T-cell (primary cell): ENCODE measurements at regions of chr1 and their contacts with region 1.

Region 1: DNA sequence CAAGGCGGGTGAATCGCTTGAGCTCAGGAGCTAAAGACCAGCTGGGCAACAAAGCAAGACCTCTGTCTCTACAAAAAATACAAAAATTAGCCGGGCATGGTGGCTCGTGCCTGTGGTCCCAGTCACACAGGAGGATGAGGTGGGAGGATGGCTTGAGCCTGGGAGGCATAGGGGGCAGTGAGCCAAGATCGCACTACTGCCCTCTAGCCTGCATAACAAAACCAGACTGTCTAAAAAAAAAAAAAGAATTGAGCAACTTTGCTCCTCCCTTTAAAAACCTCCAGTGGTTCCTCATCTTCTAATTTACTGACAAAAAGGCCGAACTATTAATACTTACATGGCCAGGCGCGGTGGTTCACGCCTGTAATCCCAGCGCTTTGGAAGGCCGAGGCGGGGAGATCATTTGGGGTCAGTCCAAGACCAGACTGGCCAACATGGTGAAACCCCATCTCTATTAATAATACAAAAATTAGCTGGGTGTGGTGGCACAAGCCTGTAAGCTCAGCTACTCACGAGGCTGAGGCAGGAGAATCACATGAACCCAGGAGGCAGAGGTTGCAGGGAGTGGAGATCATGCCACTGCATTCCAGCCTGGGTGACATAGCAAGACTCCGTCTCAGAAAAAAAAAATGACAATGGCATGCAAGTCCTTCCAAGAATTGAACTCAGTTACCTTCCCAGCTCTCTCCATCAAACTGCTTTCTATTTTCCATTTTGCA is 4.4 kb downstream of the ACBD3 start:
- DNase-seq: peak in 1 of 35 experiments; percentile 8
- ATAC-seq: no peak
- H3K4me3 ChIP-seq: no peak overlapping the region
- H3K4me3 Mint-ChIP-seq: peak overlapping the region in 1 of 3 donors; percentile 30
- H3K27ac ChIP-seq: no peak overlapping the region
- H3K27ac Mint-ChIP-seq: peak overlapping the region in 1 of 2 donors; percentile 10
- H3K4me1 ChIP-seq: peaks cover 13 to 34% of the 10 kb centered on the region in 2 experiments
- H3K4me1 Mint-ChIP-seq: peaks cover 68 to 76% (median 71%) of the 10 kb centered on the region in 3 donors
- H3K27me3 ChIP-seq: no peaks in the 10 kb centered on the region
- H3K27me3 Mint-ChIP-seq: no peaks in the 10 kb centered on the region

Region 2: GRCh38 chr1:225556694-225557093 is 625.5 kb before region 1 on chr1:
- CTCF ChIA-PET with region 1: no interaction called
- POLR2A ChIA-PET with region 1: interaction called in 1 of 2 experiments, 10 read pairs
- DNase-seq: no peak
- ATAC-seq: no peak
- H3K4me3 ChIP-seq: no peak overlapping the region
- H3K4me3 Mint-ChIP-seq: no peak overlapping the region
- H3K27ac ChIP-seq: no peak overlapping the region
- H3K27ac Mint-ChIP-seq: no peak overlapping the region
- H3K4me1 ChIP-seq: no peaks in the 10 kb centered on the region
- H3K4me1 Mint-ChIP-seq: no peaks in the 10 kb centered on the region
- H3K27me3 ChIP-seq: peaks cover 0 to 8% of the 10 kb centered on the region in 2 experiments
- H3K27me3 Mint-ChIP-seq: peaks cover 8 to 10% of the 10 kb centered on the region in 2 donors

Region 3: DNA sequence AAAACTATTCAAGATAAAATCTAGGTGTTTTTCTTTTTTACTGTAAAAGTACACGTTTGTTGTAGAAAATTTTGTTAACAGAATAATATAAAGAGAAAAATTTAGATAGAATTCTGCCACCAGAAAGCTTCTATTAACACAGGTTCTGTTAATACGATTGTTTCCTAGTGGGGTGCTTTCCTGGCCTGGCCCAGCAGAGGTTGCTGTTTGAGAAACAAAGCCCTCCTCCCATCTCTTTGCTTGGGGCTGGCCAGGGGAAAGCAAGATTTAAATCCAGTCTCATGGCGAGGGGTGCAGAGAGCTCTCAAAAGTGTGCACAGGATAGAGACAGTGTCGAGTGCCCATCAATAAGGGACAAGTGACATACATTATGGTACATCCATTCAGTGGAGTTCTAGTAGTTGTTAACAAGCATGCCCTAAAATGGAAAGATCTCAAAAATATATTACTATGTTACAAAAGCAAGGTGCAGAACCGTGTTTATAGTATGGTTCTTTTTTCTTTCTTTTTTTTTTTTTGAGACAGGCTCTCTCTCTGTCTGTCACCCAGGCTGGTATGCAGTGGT is 19.0 kb after region 1 on chr1:
- CTCF ChIA-PET with region 1: interaction called in 1 of 2 experiments, 12 read pairs
- POLR2A ChIA-PET with region 1: interaction called in 1 of 2 experiments, 3 read pairs
- DNase-seq: peak in 1 of 35 experiments; percentile 9
- ATAC-seq: no peak
- H3K4me3 ChIP-seq: no peak overlapping the region
- H3K4me3 Mint-ChIP-seq: no peak overlapping the region
- H3K27ac ChIP-seq: no peak overlapping the region
- H3K27ac Mint-ChIP-seq: no peak overlapping the region
- H3K4me1 ChIP-seq: peaks cover 0 to 3% of the 10 kb centered on the region in 2 experiments
- H3K4me1 Mint-ChIP-seq: peaks cover 0 to 3% (median 2%) of the 10 kb centered on the region in 3 donors
- H3K27me3 ChIP-seq: peaks cover 0 to 15% of the 10 kb centered on the region in 2 experiments
- H3K27me3 Mint-ChIP-seq: peaks cover 4 to 15% of the 10 kb centered on the region in 2 donors